Activated naive CD8-positive, alpha-beta T cell treated with anti-CD3 and anti-CD28 coated beads, Interleukin-2, amount 10 ng/mL, durations not matched to agents 7 days and 5 days (primary cell): ENCODE measurements at regions of chr4 and their contacts with region 1.

Region 1: DNA sequence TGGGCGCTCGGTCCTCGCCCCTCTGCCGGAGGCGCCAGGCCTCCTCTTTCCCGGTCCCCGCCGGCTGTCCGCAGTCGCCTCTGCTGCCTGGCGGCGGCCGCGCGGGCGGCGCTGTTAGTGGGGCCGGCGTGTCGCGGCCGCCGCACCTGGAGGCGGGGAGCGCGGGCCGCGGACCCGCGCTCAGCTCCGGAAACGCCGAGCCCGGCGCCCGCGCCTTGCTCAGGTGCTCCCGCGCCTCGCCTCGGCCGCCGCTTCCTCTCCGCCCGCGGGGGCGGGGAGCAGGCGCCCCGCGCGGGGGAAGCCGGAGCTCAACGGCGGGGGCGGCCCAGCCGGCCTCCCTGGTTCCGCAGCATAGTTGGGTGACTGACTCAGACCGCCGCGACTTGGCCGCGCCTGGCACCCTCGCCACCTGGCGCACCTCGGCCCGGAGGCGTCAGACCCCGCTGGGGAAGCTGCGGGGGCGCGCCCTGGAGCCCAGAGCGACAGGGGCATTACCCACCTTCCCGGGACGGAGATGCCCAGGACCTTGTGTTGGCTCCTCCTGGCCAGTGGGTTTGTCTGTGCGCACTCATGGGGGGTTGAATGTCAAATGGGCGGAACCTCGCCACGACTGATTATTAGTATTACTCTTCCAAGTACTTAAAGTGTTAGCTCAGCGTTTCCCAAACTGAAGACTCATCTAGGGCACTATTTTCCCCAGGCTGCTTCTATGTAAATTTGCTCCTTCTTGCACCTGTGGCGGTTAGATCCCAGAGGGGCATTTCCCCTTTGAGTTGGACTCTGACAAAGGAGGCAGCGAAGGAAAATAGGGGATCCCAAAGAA is at the start of gene ARAP2:
- DNase-seq: peak; percentile 85
- ATAC-seq: peak; percentile 81
- H3K4me3 Mint-ChIP-seq: peak within 1 kb of the TSS; percentile 82
- H3K27ac Mint-ChIP-seq: peak within 1 kb of the TSS; percentile 80
- H3K4me1 Mint-ChIP-seq: peaks cover 20% of the 10 kb centered on the region
- H3K27me3 Mint-ChIP-seq: peaks cover 5% of the 10 kb centered on the region
- total RNA-seq, gene ARAP2: 63.7 to 70.3 TPM

Region 2: GRCh38 chr4:36187723-36188333 is 56.6 kb before region 1 on chr4:
- POLR2A ChIA-PET with region 1: interaction called, 18 read pairs
- DNase-seq: no peak
- ATAC-seq: no peak
- H3K4me3 Mint-ChIP-seq: no peak overlapping the region
- H3K27ac Mint-ChIP-seq: no peak overlapping the region
- H3K4me1 Mint-ChIP-seq: peaks cover 37% of the 10 kb centered on the region
- H3K27me3 Mint-ChIP-seq: no peaks in the 10 kb centered on the region

Region 3: GRCh38 chr4:36255577-36255976 is 11.1 kb after region 1 on chr4:
- POLR2A ChIA-PET with region 1: interaction called, 47 read pairs
- DNase-seq: peak; percentile 34
- ATAC-seq: peak; percentile 96
- H3K4me3 Mint-ChIP-seq: peak overlapping the region; percentile 80
- H3K27ac Mint-ChIP-seq: peak overlapping the region; percentile 86
- H3K4me1 Mint-ChIP-seq: peaks cover 33% of the 10 kb centered on the region
- H3K27me3 Mint-ChIP-seq: no peaks in the 10 kb centered on the region

Region 4: GRCh38 chr4:36285784-36286480 is 41.5 kb after region 1 on chr4:
- POLR2A ChIA-PET with region 1: interaction called, 14 read pairs
- DNase-seq: no peak
- ATAC-seq: peak; percentile 99
- H3K4me3 Mint-ChIP-seq: peak overlapping the region; percentile 69
- H3K27ac Mint-ChIP-seq: peak overlapping the region; percentile 93
- H3K4me1 Mint-ChIP-seq: peaks cover 39% of the 10 kb centered on the region
- H3K27me3 Mint-ChIP-seq: peaks cover 7% of the 10 kb centered on the region